HEK293 (cell line): ENCODE measurements at regions of chr18 and their contacts with region 1.

Region 1: GRCh38 chr18:59899298-59900221 is at the start of gene PMAIP1:
- H3K4me3 ChIP-seq: peak within 1 kb of the TSS; percentile 61
- H3K27ac ChIP-seq: peak within 1 kb of the TSS; percentile 96
- H3K4me1 ChIP-seq: peaks cover 21% of the 10 kb centered on the region
- CTCF ChIP-seq: no peak

Region 2: DNA sequence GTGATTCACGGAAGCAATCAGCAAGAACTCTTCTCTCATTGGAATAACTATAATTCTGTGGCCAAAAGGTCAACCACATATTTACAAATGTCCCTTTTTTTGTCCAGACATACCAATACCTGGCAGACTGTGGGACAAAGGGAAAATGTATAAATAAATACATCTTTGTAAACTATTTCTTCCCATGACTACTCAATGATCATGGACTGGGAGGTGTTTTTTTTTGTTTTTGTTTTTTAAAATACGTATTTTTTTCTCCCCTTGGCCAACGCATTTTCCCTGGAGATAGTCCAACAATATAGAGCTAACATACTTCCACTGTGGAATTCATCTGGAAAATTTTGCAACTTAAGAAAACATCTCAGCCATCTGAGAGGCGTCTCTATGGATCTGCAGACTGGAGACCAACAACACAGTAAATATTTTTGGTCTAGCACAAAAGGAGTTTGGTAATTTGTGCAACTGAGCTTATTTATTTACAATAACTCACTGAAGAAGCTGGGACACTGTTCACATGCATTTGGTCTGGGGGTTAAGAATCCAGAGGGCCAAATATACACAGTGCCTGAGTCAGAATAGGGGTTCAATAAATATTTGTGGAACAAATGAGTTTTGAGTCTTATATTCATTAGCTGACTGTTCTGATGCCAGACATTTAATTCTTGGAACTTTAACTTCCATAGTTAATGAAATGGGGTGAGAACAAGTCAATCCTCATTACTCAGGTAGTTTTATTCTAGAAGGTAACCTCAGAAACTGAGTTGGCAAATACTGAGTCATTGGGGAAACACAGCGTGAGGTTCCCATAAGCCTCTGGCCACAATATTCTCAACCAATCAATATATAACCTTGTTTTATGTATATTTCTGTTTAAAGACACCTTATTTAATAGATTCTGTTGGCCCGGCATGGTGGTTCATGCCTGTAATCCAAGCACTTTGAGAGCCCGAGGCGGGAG is 238.5 kb before region 1 on chr18:
- CTCF ChIA-PET with region 1: interaction called, 3 read pairs
- POLR2A ChIA-PET with region 1: interaction called, 11 read pairs
- H3K4me3 ChIP-seq: no peak overlapping the region
- H3K27ac ChIP-seq: no peak overlapping the region
- H3K4me1 ChIP-seq: peaks cover 12% of the 10 kb centered on the region
- CTCF ChIP-seq: no peak

Region 3: GRCh38 chr18:59864147-59864641 is 35.4 kb before region 1 on chr18:
- CTCF ChIA-PET with region 1: no interaction called
- POLR2A ChIA-PET with region 1: interaction called, 22 read pairs
- H3K4me3 ChIP-seq: no peak overlapping the region
- H3K27ac ChIP-seq: no peak overlapping the region
- H3K4me1 ChIP-seq: peaks cover 4% of the 10 kb centered on the region
- CTCF ChIP-seq: no peak

Region 4: GRCh38 chr18:59885579-59886163 is 13.9 kb before region 1 on chr18:
- CTCF ChIA-PET with region 1: no interaction called
- POLR2A ChIA-PET with region 1: interaction called, 69 read pairs
- H3K4me3 ChIP-seq: no peak overlapping the region
- H3K27ac ChIP-seq: no peak overlapping the region
- H3K4me1 ChIP-seq: peaks cover 16% of the 10 kb centered on the region
- CTCF ChIP-seq: no peak

Region 5: GRCh38 chr18:59957971-59958595 is 58.5 kb after region 1 on chr18:
- CTCF ChIA-PET with region 1: no interaction called
- POLR2A ChIA-PET with region 1: interaction called, 29 read pairs
- H3K4me3 ChIP-seq: no peak overlapping the region
- H3K27ac ChIP-seq: no peak overlapping the region
- H3K4me1 ChIP-seq: peaks cover 13% of the 10 kb centered on the region
- CTCF ChIP-seq: no peak